Calu3 (cell line): ENCODE measurements at regions of chr19 and their contacts with region 1.

Region 1: GRCh38 chr19:45092747-45093678 is at the start of gene PPP1R37:
- DNase-seq: peak; percentile 96
- H3K4me3 Mint-ChIP-seq: peak within 1 kb of the TSS; percentile 77
- H3K27ac Mint-ChIP-seq: peak within 1 kb of the TSS; percentile 96
- H3K4me1 Mint-ChIP-seq: peaks cover 43% of the 10 kb centered on the region
- H3K27me3 Mint-ChIP-seq: no peaks in the 10 kb centered on the region
- CTCF ChIP-seq: no peak
- total RNA-seq, gene PPP1R37: 45.7 and 59.7 TPM in 2 replicates

Region 2: DNA sequence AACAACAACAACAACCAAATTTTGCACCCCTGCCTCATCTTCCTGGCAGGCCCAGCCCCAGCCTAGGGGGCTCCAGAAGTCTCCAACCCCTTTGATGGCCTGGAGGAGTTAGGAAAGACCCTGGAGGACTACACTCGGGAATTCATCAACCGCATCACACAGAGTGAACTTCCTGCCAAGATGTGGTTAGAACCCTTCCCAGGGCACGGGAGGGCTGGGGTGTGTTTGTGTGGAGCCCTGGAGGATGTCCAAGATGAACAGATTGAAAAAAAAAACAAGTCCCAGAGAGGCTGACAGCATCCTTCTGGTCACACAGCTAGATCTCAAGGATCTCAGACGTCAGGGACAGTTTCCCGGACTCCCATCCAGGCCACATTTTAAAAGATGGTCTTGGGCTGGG is 165.3 kb before region 1 on chr19:
- CTCF ChIA-PET with region 1: no interaction called
- intact Hi-C with region 1: no loop called
- DNase-seq: no peak
- H3K4me3 Mint-ChIP-seq: no peak overlapping the region
- H3K27ac Mint-ChIP-seq: no peak overlapping the region
- H3K4me1 Mint-ChIP-seq: peaks cover 8% of the 10 kb centered on the region
- H3K27me3 Mint-ChIP-seq: peaks cover 56% of the 10 kb centered on the region
- CTCF ChIP-seq: no peak

Region 3: DNA sequence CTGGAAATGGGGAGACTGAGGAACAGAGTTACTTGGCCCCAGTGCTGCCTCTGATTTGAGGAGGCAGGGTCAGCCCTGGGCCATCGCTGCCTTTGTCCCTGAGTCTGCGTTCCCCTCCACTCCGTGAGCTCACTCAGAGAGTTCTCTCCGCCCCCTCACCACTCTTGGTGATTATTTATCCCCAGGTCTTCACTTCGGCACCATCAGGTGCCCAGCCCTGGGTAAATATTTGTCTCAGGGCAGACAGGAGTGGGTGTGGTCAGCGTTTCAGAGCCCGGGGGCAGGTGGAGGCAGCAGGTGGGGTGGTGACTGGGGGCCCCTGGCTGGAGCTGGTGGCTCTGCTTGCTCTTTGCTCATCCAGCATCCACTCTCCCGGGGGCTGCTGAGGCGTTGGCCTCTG is 20.6 kb after region 1 on chr19:
- CTCF ChIA-PET with region 1: interaction called, 11 read pairs
- intact Hi-C with region 1: no loop called
- DNase-seq: peak; percentile 74
- H3K4me3 Mint-ChIP-seq: peak overlapping the region; percentile 50
- H3K27ac Mint-ChIP-seq: peak overlapping the region; percentile 62
- H3K4me1 Mint-ChIP-seq: peaks cover 59% of the 10 kb centered on the region
- H3K27me3 Mint-ChIP-seq: no peaks in the 10 kb centered on the region
- CTCF ChIP-seq: no peak

Region 4: GRCh38 chr19:45125926-45126493 is 33.0 kb after region 1 on chr19:
- CTCF ChIA-PET with region 1: interaction called, 19 read pairs
- intact Hi-C with region 1: loop called (anchors 5 kb)
- DNase-seq: peak; percentile 92
- H3K4me3 Mint-ChIP-seq: no peak overlapping the region
- H3K27ac Mint-ChIP-seq: no peak overlapping the region
- H3K4me1 Mint-ChIP-seq: peaks cover 63% of the 10 kb centered on the region
- H3K27me3 Mint-ChIP-seq: no peaks in the 10 kb centered on the region
- CTCF ChIP-seq: peak; percentile 81

Region 5: DNA sequence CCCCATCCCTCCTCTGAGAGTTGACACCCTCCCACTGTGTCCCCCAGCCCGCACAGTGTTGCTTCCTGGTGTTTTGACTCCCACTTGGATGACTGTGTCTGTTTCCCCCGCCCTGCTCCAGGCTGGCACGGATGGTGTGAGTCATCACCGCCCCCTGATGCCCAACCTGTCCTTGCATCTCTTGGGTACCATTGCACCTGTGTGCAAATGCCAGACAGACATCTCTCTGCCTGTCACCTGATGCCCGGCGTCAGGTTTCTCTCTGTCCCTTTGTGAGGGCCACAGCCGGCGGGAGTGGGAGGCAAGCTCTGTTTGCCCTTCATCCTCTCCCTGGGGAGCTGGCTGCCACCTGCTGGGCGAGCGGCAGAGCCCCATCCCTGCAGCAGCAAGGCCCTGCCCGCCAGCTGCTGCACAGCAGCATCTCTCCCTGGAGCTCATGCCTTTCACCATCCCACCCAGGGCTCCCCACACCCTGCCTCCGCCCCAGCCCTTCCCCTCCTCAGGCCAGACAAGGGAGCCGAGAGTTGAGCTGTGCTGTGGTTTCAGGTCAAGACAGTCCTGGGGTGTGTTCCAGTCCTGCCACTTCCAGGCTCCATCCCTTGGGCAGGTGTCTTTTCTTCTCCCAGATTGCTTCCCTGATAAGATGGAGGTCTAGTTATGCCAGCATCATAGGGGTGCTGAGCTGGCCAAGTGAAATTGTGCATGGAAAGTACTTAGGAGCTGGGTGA is 38.0 kb after region 1 on chr19:
- CTCF ChIA-PET with region 1: interaction called, 19 read pairs
- intact Hi-C with region 1: loop called (anchors 5 kb)
- DNase-seq: peak; percentile 83
- H3K4me3 Mint-ChIP-seq: no peak overlapping the region
- H3K27ac Mint-ChIP-seq: peak overlapping the region; percentile 28
- H3K4me1 Mint-ChIP-seq: peaks cover 22% of the 10 kb centered on the region
- H3K27me3 Mint-ChIP-seq: no peaks in the 10 kb centered on the region
- CTCF ChIP-seq: peak; percentile 70

Region 6: GRCh38 chr19:45150741-45151303 is 57.8 kb after region 1 on chr19:
- CTCF ChIA-PET with region 1: no interaction called
- intact Hi-C with region 1: no loop called
- DNase-seq: no peak
- H3K4me3 Mint-ChIP-seq: no peak overlapping the region
- H3K27ac Mint-ChIP-seq: peak overlapping the region; percentile 30
- H3K4me1 Mint-ChIP-seq: peaks cover 13% of the 10 kb centered on the region
- H3K27me3 Mint-ChIP-seq: no peaks in the 10 kb centered on the region
- CTCF ChIP-seq: no peak